Ovary (tissue), 10 donors: ENCODE measurements at regions of chr12 and their contacts with region 1.

Region 1: GRCh38 chr12:11486623-11487444 is 91.5 kb upstream of the PRB2 start:
- DNase-seq: peak; percentile 47 to 72 (median 62)
- H3K4me3 ChIP-seq: no peak overlapping the region
- H3K27ac ChIP-seq: no peak overlapping the region
- H3K4me1 ChIP-seq: no peaks in the 10 kb centered on the region
- H3K27me3 ChIP-seq: no peaks in the 10 kb centered on the region
- CTCF ChIP-seq: peak; percentile 45 to 76 (median 63)
- EP300 ChIP-seq: no peak
- POLR2A ChIP-seq: no peak

Region 2: DNA sequence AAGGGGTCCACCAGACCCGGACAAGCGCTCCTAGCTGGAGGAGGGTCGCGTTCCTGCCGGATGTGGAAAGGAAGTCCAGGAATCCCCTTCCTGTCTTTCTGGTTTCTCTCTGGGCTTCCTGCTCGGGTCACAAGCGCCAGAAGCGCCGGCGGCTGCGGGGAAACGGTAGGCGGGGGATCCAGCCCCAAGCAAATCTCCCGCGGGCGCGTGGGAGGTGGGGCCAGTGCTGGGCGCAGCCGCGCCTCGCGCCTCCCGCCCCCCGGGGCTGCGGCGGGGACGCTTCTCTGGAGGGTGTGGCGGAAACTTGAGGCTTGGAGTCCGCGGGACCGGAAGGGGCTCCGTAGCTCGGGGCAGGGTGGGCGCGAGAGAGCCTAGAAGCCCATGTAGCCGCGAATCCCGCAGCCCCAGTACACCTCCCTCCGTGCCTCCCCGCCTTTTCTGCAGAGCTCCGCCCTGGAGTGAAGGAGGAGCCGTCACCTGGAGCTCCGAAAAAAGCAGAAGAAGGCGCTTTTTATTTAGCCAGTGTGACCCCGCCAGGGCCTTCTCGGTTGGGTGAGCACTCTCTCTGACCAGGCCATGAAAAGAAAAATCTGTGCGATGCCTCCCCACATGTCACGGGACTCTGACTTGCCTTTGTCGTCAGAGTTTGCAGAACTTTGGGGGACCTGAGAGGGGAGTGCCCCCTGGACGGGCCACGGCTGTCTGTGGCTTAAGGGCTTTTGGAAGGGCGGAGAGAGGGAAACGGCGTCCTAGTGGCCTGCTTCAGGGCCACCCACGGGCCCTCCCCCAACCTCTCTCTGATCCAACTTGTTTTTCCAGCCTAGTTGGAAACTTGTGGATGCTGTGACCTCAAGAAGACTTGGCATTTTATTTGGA is 1838.8 kb before region 1 on chr12:
- intact Hi-C with region 1: loop called in 1 of 4 experiments (anchors 5 kb)
- DNase-seq: peak; percentile 77 to 89 (median 82)
- H3K4me3 ChIP-seq: peak overlapping the region; percentile 68
- H3K27ac ChIP-seq: peak overlapping the region; percentile 79 to 81
- H3K4me1 ChIP-seq: peaks cover 3% of the 10 kb centered on the region
- H3K27me3 ChIP-seq: no peaks in the 10 kb centered on the region
- CTCF ChIP-seq: no peak
- EP300 ChIP-seq: no peak
- POLR2A ChIP-seq: peak; percentile 16

Region 3: DNA sequence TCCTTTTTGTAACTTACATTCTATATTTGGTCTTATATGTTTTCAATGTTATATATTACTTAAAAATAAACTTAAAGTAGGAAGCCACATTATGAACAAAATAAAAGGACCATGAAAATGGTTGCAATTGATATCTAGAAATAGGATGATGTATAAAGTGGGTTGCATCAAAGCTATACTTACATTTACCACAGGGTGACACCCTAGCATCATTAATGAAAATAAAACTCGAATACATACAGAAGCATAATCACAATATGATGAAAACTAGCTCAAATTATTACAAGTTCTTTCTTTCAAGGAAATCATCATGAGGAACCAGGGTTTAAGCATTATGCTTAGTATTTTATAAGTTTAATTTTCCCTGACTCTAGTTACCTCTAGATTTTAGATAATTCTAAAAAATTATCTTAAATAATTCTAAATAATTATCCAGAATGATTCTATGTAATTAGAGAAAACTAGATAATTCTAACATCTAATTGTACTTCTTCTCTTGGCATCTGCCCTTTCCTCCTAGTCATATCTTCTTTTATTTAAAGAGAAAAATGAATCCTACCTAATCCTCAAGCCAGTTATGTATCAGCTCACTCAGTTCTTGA is 715.6 kb before region 1 on chr12:
- intact Hi-C with region 1: loop called in 2 of 4 experiments (anchors 5 to 10 kb)
- DNase-seq: no peak
- H3K4me3 ChIP-seq: no peak overlapping the region
- H3K27ac ChIP-seq: no peak overlapping the region
- H3K4me1 ChIP-seq: no peaks in the 10 kb centered on the region
- H3K27me3 ChIP-seq: no peaks in the 10 kb centered on the region
- CTCF ChIP-seq: peak in 2 of 3 donors; percentile 49 to 56
- EP300 ChIP-seq: no peak
- POLR2A ChIP-seq: no peak